Naive thymus-derived CD4-positive, alpha-beta T cell (primary cell): ENCODE measurements at regions of chr6 and their contacts with region 1.

Region 1: GRCh38 chr6:13574149-13574570 is 241 bp upstream of the SIRT5 start:
- DNase-seq: peak; percentile 91 to 96 (median 94)
- ATAC-seq: peak; percentile 89
- H3K4me3 ChIP-seq: peak overlapping the region; percentile 93
- H3K4me3 Mint-ChIP-seq: peak overlapping the region; percentile 88 to 99 (median 95)
- H3K27ac ChIP-seq: peak overlapping the region; percentile 80
- H3K27ac Mint-ChIP-seq: peak overlapping the region; percentile 88 to 99 (median 95)
- H3K4me1 ChIP-seq: peaks cover 5 to 13% of the 10 kb centered on the region in 2 donors
- H3K4me1 Mint-ChIP-seq: peaks cover 10 to 44% (median 28%) of the 10 kb centered on the region in 7 donors
- H3K27me3 ChIP-seq: no peaks in the 10 kb centered on the region
- H3K27me3 Mint-ChIP-seq: no peaks in the 10 kb centered on the region

Region 2: DNA sequence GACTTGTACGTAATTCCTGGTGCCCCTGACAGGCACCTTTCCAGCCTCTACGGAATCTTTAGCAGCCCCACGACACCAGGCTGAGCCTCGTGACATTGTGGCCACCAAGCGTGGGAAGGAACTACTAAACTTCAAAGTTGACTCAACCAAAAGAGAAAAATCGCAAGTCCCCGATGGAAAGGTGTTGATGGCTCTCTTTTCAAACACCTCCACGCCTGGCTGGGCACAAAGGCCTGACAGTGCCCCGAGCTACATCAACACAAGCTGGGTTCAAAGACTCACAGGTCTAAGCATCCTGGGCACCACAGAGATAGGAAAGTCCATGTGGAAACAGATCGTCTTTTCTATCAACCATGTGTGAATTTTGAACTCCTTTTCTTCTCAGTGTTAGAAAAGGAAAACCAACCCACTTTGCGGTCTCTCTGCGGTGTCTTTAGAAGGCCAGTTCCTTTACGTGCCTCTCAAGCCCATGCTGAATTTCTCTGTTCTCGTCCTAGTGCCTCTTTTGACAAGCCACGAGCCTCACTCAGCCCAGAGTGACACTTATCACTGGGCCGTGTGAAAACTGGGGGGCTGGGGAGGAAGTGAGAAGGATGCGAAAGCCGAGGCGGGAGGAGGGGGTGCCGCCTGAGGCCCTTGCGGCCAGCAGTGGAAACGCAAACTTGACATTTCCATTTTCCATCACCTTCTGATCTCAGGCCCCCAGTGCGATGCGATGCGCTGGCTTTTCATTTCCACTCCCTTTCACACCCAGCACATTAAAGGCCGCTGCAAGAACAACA is 146.2 kb before region 1 on chr6:
- CTCF ChIA-PET with region 1: interaction called, 5 read pairs
- POLR2A ChIA-PET with region 1: no interaction called
- intact Hi-C with region 1: loop called in 1 of 2 experiments (anchors 1 kb)
- DNase-seq: peak; percentile 29 to 76 (median 52)
- ATAC-seq: peak; percentile 86
- H3K4me3 ChIP-seq: peak overlapping the region; percentile 40
- H3K4me3 Mint-ChIP-seq: peak overlapping the region; percentile 62 to 92 (median 80)
- H3K27ac ChIP-seq: peak overlapping the region; percentile 9
- H3K27ac Mint-ChIP-seq: peak overlapping the region; percentile 1 to 85 (median 79)
- H3K4me1 ChIP-seq: peaks cover 26 to 55% of the 10 kb centered on the region in 2 donors
- H3K4me1 Mint-ChIP-seq: peaks cover 21 to 78% (median 49%) of the 10 kb centered on the region in 7 donors
- H3K27me3 ChIP-seq: no peaks in the 10 kb centered on the region
- H3K27me3 Mint-ChIP-seq: peaks cover 0 to 2% (median 0%) of the 10 kb centered on the region in 5 donors

Region 3: DNA sequence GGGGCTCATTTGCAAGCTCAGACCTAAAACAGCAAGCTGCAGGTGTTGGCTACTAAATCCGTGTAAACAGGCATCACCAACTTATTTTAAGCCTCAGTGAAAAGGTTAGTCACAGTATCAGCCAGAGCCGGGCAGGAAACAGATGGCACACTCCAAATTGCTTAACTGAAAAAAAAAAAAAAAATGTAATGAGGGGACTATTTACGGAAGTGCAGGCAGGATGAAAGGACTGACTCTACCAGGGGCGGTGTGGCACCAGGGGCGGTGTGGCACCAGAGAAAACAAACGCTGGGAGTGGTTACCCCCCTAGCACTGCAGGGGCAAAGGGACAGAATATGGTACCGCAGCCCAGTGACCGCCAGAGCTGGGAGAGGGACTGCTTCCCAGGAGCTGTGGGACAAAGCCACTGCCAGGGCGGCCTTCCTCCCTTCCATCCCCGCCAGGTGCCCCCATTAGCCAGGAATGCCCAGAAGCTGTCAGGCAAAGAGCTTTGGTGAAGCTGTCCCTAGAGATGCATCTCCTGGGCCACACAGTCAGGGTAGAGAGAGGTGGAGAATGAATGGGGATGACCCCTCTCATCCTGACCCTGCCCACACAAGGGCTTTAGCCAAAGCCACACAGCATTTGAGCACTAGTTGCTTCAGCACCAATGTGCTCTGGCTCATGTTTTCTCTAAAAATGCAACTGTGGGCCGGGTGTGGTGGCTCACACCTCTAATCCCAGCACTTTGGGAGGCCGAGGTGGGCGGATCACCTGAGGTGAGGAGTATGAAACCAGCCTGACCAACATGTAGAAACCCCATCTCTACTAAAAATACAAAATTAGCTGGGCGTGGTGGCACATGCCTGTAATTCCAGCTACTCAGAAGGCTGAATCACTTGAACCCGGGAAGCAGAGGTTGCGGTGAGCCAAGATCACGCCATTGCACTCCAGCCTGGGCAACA is 47.2 kb before region 1 on chr6:
- CTCF ChIA-PET with region 1: interaction called, 8 read pairs
- POLR2A ChIA-PET with region 1: interaction called, 6 read pairs
- intact Hi-C with region 1: loop called in 1 of 2 experiments (anchors 1 kb)
- DNase-seq: peak in 7 of 9 donors; percentile 43 to 70 (median 54)
- ATAC-seq: peak; percentile 94
- H3K4me3 ChIP-seq: no peak overlapping the region
- H3K4me3 Mint-ChIP-seq: peak overlapping the region in 7 of 10 donors; percentile 6 to 50 (median 29)
- H3K27ac ChIP-seq: no peak overlapping the region
- H3K27ac Mint-ChIP-seq: peak overlapping the region; percentile 23 to 81 (median 56)
- H3K4me1 ChIP-seq: peaks cover 0 to 13% of the 10 kb centered on the region in 2 donors
- H3K4me1 Mint-ChIP-seq: peaks cover 9 to 27% (median 15%) of the 10 kb centered on the region in 7 donors
- H3K27me3 ChIP-seq: no peaks in the 10 kb centered on the region
- H3K27me3 Mint-ChIP-seq: no peaks in the 10 kb centered on the region

Region 4: DNA sequence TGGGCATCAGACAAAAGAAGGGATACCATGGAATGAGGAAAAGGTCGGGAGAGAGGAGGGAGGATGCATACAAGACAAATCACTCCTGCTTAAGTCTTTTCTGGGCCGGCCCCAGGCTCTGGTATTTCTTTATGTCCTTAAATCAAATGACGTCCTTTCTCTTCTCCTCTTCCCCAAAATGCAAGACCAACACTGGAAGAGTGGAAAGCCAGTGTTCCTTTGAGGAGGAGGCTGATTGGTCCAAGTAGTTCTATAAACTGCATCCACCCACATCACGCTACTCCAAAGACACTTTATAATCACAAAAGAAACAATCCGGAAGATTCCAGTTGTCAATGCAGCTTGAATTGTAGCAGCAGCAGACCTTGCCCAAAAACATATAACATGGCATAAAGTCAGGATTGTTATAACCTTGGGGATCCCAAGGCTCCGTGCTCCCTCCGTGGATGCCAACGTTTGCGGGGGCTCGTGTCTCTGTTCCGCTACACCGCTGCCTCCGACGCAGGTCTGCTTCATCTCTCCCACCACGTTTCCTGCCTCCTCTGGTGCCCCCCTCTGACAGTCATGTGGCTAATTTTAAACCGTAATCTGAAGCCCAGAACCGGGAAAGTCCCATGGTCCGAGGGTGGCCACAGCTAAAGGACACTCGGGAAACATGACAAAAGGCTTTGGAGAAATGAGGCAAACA is 193.1 kb after region 1 on chr6:
- CTCF ChIA-PET with region 1: interaction called, 7 read pairs
- POLR2A ChIA-PET with region 1: interaction called, 6 read pairs
- intact Hi-C with region 1: loop called in 1 of 2 experiments (anchors 1 kb)
- DNase-seq: peak in 8 of 9 donors; percentile 12 to 48 (median 30)
- ATAC-seq: peak; percentile 66
- H3K4me3 ChIP-seq: peak overlapping the region; percentile 51
- H3K4me3 Mint-ChIP-seq: peak overlapping the region; percentile 53 to 86 (median 76)
- H3K27ac ChIP-seq: no peak overlapping the region
- H3K27ac Mint-ChIP-seq: peak overlapping the region in 7 of 9 donors; percentile 6 to 92 (median 59)
- H3K4me1 ChIP-seq: peaks cover 8 to 13% of the 10 kb centered on the region in 2 donors
- H3K4me1 Mint-ChIP-seq: peaks cover 10 to 49% (median 30%) of the 10 kb centered on the region in 7 donors
- H3K27me3 ChIP-seq: no peaks in the 10 kb centered on the region
- H3K27me3 Mint-ChIP-seq: peaks cover 0 to 6% (median 0%) of the 10 kb centered on the region in 5 donors

Region 5: GRCh38 chr6:14046476-14047068 is 472.4 kb after region 1 on chr6:
- CTCF ChIA-PET with region 1: no interaction called
- POLR2A ChIA-PET with region 1: no interaction called
- intact Hi-C with region 1: loop called in 1 of 2 experiments (anchors 1 kb)
- DNase-seq: peak in 6 of 9 donors; percentile 26 to 47 (median 38)
- ATAC-seq: peak; percentile 80
- H3K4me3 ChIP-seq: no peak overlapping the region
- H3K4me3 Mint-ChIP-seq: no peak overlapping the region
- H3K27ac ChIP-seq: no peak overlapping the region
- H3K27ac Mint-ChIP-seq: peak overlapping the region in 1 of 9 donors; percentile 5
- H3K4me1 ChIP-seq: no peaks in the 10 kb centered on the region
- H3K4me1 Mint-ChIP-seq: peaks cover 0 to 4% (median 0%) of the 10 kb centered on the region in 7 donors
- H3K27me3 ChIP-seq: no peaks in the 10 kb centered on the region
- H3K27me3 Mint-ChIP-seq: peaks cover 12 to 48% (median 32%) of the 10 kb centered on the region in 5 donors